Left cardiac atrium (tissue), 4 donors: ENCODE measurements at regions of chr7 and their contacts with region 1.

Region 1: DNA sequence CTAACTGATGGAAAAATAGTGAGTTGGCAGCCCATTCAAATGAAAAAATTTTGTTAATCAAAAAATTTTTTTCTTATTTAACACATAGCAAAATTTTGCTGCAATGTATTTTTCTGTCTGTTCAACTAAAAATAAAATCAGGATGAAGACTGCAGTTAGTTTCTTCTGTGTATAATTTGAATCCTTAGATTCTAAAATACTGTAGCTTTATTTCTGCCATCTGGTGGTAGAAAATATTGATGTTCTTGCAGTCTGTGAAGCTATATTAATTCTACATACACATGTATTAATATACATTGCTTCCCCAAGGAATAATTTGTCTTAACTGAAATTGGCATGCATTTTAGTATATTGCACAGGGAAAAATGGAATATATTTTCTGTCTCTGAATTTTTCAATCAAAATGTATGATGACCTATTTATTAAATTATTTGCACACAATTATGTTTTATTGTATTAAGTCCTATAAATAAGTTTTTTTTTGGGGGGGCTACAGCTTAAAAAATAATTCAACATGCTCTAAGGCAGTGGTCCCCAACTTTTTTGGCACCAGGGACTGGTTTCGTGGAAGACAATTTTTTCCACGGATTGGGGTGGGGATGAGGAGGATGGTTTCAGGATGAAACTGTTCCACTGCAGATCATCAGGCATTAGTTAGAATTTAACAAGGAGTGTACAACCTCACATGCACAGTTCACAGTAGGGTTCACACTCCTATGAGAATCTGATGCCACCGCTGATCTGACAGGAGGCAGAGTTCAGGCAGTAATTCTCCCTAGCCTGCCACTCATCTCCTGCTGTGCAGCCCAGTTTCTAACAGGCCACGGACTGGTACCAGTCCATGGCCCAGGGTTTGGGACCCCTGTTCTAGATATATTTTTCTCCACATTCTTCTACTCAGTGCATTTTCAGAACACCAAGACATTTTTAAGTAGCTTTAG is 119.4 kb downstream of the GNAT3 start:
- DNase-seq: no peak
- ATAC-seq: no peak

Region 2: GRCh38 chr7:80053124-80053523 is 339.4 kb before region 1 on chr7:
- intact Hi-C with region 1: loop called (anchors 5 to 10 kb)
- DNase-seq: no peak
- ATAC-seq: no peak

Region 3: DNA sequence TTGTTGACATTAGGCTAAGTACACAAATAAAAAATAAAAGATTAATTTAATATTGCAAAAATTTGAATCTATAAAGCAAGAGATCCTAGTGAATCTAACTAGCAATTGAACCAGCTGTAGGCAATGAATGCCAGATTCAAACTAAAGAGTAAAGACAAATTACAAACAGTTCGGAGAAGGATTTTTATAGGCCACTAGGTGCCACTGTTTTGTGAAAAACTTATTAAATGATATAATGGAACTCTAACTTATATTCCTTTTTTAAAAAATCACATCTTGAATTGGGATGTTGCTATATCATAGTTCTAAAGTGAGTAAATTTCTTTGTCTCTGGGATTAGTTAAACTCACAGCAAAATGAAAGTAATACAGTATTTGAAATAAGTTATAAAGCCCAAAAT is 297.0 kb before region 1 on chr7:
- intact Hi-C with region 1: loop called (anchors 10 kb)
- DNase-seq: no peak
- ATAC-seq: no peak

Region 4: DNA sequence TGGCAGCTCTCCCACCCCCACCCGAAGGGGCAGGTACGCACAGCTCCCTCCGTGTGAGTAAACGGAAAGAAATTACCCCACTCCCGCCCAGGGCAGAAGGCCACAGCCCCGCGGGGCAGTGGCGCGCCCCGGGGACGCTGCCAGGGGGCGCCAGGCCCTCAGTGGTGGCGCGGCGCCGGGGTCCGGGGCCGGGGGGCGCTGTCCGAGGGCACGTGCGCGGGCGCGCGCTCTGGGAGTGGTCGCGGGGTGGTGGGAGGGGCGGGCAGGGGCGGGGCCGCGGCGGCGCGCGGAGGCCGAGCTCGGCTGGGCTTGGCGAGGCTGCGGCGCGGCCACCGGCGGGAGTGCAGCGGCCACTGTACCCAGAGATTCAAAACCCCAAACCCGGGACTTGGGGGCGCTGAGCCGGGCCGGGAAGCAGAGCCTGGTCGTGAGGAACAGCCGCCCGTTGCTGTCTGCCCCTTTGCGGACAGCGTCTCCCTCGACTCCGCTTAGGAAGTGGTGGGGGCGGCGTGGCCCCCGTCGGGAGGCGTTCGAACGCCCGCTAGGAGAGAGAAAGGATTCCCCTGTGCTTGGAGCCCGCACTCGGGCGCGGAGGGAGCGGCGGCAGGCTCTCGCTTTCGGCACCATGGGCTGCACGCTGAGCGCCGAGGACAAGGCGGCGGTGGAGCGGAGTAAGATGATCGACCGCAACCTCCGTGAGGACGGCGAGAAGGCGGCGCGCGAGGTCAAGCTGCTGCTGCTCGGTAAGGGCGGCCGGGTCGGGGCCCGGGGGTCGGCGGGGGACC is 257.8 kb before region 1 on chr7 and contains the start of gene GNAI1:
- intact Hi-C with region 1: loop called in 1 of 2 experiments (anchors 5 kb)
- DNase-seq: peak; percentile 68
- ATAC-seq: peak; percentile 91
- total RNA-seq, gene GNAI1: 16.0 to 18.4 TPM